GM13977 (cell line): ENCODE measurements at regions of chr18 and their contacts with region 1.

Region 1: GRCh38 chr18:36095936-36096519 is 28.7 kb upstream of the RPRD1A start:
- DNase-seq: peak; percentile 56
- CTCF ChIP-seq: peak; percentile 48

Region 2: DNA sequence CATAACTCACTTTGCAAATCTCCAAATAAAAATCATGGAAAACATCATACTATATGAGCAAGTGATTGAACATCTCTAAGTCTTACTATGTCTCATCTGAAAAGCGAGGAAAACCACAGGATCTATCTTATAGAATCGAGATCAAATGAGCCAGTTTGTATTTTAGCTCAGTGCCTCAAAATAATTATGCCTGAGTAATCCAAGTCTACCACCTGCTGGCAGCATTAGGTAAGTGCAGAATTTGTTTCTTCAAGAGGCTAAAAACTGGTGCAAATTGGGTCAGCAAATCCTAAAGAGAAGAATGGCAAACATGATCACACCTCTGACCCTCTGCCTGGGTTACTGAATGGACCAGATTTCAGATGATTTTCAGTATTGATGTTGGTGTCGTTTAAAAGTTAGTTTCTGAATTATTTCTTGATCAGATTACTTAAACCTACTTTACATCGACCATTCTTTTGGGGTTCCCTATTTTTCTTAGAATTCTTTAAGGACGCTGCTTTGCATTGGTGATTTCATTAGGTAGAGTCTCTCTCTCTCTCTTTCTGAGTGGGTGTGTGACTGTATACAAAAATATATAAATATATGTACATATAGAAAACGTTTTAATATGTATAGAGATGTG is 188.8 kb after region 1 on chr18:
- in situ Hi-C with region 1: loop called (anchors 10 kb)
- DNase-seq: peak; percentile 39
- CTCF ChIP-seq: peak; percentile 80

Region 3: GRCh38 chr18:36309436-36310391 is 213.7 kb after region 1 on chr18:
- in situ Hi-C with region 1: no loop called
- DNase-seq: no peak
- CTCF ChIP-seq: no peak